ENCODE measurements at regions of chr21 and their contacts with region 1.

Region 1: DNA sequence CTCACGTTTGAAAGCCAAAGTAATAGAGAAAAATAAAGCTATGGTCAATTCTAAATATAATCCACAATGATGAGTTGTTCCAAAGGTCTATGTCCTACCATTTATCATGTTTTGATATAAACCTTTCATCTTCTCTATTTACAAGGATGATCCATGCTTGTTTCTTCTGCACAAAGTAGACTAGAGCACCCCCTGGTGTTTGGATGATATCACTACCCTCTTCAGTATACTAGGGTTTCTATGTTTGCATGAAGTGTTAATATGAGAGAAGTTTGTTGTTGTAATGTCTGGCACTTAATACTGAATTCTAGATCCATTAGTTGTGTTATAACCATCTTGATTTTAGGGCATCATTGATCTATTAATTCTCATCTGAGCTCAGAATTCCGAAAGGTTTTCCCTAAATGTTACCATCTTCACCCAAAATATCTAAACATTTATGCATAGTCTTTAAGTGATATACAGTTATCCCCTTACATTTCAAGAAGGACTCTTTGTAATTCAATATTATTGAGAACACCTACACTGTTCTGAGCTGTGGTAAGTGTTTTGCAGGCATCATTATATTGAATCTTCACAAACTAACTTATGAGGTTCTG is 21.1 kb downstream of the CLDN8 start:
- DNase-seq: no peak
- ATAC-seq: no peak
- H3K4me3 ChIP-seq: no peak overlapping the region
- H3K27ac ChIP-seq: no peak overlapping the region
- H3K4me1 ChIP-seq: no peaks in the 10 kb centered on the region
- H3K27me3 ChIP-seq: no peaks in the 10 kb centered on the region
- CTCF ChIP-seq: peak in 9 of 12 donors; percentile 10 to 53 (median 33)
- POLR2A ChIP-seq: no peak

Region 2: DNA sequence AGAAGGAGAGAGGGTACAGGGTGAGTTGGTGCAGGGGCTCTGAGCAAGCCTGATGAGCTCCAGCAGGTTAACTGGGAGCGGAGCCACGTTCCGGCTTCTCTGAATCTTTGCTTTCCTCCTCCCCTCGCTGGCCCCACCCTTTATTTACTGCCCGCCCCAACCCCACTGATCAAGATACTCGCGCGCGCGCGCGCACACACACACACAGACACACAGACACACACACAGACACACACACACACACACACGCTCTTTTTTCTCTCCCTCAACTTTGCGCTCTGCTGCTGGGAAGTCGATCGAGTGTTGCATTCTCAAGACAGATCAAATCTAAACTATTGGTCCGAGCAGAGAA is 254.9 kb before region 1 on chr21 and contains the start of gene GRIK1:
- intact Hi-C with region 1: loop called in 1 of 10 experiments (anchors 5 kb)
- DNase-seq: no peak
- ATAC-seq: no peak
- H3K4me3 ChIP-seq: peak within 1 kb of the TSS in 10 of 12 donors; percentile 5 to 45 (median 33)
- H3K27ac ChIP-seq: no peak within 1 kb of the TSS
- H3K4me1 ChIP-seq: peaks cover 0 to 12% (median 1%) of the 10 kb centered on the region in 12 donors
- H3K27me3 ChIP-seq: peaks cover 0 to 69% (median 40%) of the 10 kb centered on the region in 9 donors
- CTCF ChIP-seq: no peak
- POLR2A ChIP-seq: no peak
- total RNA-seq, gene GRIK1: 0.12 TPM in 1 of 9 donors, not detected in the others

Measured in heart left ventricle (tissue), 16 donors.